ENCODE measurements at regions of chr1 and their contacts with region 1.

Region 1: DNA sequence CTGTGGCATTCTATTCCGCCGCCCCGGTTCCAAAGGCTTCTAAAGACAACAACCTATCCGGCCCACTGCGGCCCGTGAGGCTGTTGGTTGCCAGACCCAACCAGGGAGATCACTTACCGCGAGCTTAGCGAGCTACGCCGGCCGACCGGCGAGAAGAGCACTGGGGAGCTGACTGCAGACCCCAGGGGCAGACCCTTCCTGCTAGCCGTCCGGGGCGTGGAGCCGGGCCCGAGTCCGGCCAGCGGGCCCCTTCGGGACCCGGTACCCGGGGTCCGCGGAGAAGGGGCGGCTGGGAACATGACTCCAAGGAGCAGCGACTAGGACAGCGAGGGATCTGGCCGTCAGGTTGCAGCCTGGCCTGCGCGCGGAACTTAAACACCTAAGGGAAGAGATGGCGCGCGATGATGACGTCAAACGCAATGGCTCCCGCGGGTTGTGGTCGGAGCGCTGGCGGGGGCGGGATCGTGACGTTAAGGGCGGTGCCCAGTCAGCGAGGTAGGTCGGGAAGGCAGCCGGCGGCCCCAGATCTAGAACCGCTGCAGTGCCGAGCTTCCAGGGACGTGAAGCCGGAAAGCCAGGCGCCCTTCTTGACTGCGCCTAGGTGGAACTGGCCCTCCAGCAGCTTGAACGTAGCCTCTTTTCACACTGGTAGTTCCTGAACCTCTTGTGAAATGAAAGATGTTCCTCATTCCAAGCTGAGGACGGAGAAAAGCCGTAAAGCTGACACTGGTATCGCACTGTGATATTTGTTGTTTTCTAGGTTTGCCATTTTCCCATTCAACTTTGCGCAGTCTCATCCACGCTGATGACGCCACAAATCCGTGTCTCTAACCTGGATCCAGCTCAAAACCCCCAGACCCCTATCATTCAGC is at the start of gene NUP133:
- DNase-seq: peak; percentile 99
- ATAC-seq: peak; percentile 95
- H3K4me3 ChIP-seq: peak within 1 kb of the TSS; percentile 87 to 99 (median 92)
- H3K4me3 Mint-ChIP-seq: peak within 1 kb of the TSS; percentile 96
- H3K27ac ChIP-seq: peak within 1 kb of the TSS; percentile 93 to 94
- H3K27ac Mint-ChIP-seq: peak within 1 kb of the TSS; percentile 99
- H3K4me1 ChIP-seq: peaks cover 14 to 17% of the 10 kb centered on the region in 2 donors
- H3K4me1 Mint-ChIP-seq: peaks cover 23% of the 10 kb centered on the region
- H3K27me3 ChIP-seq: no peaks in the 10 kb centered on the region
- H3K27me3 Mint-ChIP-seq: no peaks in the 10 kb centered on the region
- CTCF ChIP-seq: no peak
- total RNA-seq, gene NUP133: 49.7 and 50.5 TPM in 2 replicates

Region 2: GRCh38 chr1:229270547-229271447 is 237.4 kb before region 1 on chr1 and contains the start of gene RAB4A:
- CTCF ChIA-PET with region 1: interaction called, 5 read pairs
- POLR2A ChIA-PET with region 1: no interaction called
- intact Hi-C with region 1: loop called (anchors 1 kb)
- DNase-seq: peak; percentile 90
- ATAC-seq: peak; percentile 90
- H3K4me3 ChIP-seq: peak within 1 kb of the TSS; percentile 59 to 89 (median 75)
- H3K4me3 Mint-ChIP-seq: peak within 1 kb of the TSS; percentile 96
- H3K27ac ChIP-seq: peak within 1 kb of the TSS; percentile 24 to 49
- H3K27ac Mint-ChIP-seq: peak within 1 kb of the TSS; percentile 85
- H3K4me1 ChIP-seq: peaks cover 16 to 22% of the 10 kb centered on the region in 2 donors
- H3K4me1 Mint-ChIP-seq: peaks cover 30% of the 10 kb centered on the region
- H3K27me3 ChIP-seq: no peaks in the 10 kb centered on the region
- H3K27me3 Mint-ChIP-seq: no peaks in the 10 kb centered on the region
- CTCF ChIP-seq: no peak
- total RNA-seq, gene RAB4A: 46.0 and 49.7 TPM in 2 replicates

Region 3: DNA sequence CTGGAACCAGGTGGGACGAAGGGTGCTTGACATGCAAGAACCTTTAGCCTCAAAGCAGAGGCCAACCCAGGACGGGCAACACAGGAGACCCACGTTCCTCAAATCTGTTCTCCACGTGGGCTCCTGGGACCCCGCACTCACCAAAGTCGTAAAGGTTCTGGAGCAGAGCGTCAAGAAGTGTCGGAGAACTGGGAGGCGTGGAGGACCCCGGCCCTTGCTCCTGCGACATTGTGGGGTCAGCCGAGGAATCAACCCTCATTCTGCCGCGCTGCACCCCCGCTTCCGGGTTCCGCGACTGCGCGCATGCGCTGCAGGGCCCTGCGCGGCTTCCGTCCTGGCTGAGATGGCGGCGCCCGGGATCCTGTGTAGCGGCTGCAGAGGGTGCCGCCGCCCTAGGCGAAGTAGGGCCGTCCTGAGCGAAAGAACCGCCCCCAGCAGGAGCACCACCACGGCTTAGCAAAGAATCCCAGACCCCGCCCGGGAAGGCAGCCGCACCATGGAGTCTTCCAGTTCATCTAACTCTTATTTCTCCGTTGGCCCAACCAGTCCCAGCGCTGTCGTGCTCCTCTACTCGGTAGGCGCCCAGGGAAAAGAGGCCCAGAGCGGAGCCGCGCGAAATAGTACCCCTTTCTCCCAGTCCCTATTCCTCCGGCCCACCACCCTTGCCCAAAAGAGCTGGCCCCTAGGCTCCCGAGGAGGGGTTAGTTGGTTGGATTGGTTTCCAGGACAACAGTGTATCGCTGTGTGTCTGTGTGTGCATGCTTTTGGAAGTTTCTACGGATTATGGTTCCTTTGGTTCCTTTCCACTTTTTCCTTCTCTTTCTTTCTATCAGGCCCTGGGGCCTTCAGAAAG is 1732.9 kb after region 1 on chr1 and contains the start of gene GNPAT:
- CTCF ChIA-PET with region 1: no interaction called
- POLR2A ChIA-PET with region 1: interaction called, 3 read pairs
- intact Hi-C with region 1: loop called (anchors 5 kb)
- DNase-seq: peak; percentile 93
- ATAC-seq: peak; percentile 96
- H3K4me3 ChIP-seq: peak within 1 kb of the TSS; percentile 78 to 92 (median 88)
- H3K4me3 Mint-ChIP-seq: peak within 1 kb of the TSS; percentile 96
- H3K27ac ChIP-seq: peak within 1 kb of the TSS; percentile 76 to 87
- H3K27ac Mint-ChIP-seq: peak within 1 kb of the TSS; percentile 95
- H3K4me1 ChIP-seq: peaks cover 23 to 29% of the 10 kb centered on the region in 2 donors
- H3K4me1 Mint-ChIP-seq: peaks cover 68% of the 10 kb centered on the region
- H3K27me3 ChIP-seq: no peaks in the 10 kb centered on the region
- H3K27me3 Mint-ChIP-seq: no peaks in the 10 kb centered on the region
- CTCF ChIP-seq: no peak
- total RNA-seq, gene GNPAT: 48.0 and 49.0 TPM in 2 replicates